CD8-positive, alpha-beta T cell (primary cell): ENCODE measurements at regions of chr10 and their contacts with region 1.

Region 1: GRCh38 chr10:32049113-32049512 is 7.1 kb downstream of the KIF5B start:
- DNase-seq: no peak
- ATAC-seq: no peak
- H3K4me3 ChIP-seq: no peak overlapping the region
- H3K4me3 Mint-ChIP-seq: no peak overlapping the region
- H3K27ac ChIP-seq: no peak overlapping the region
- H3K27ac Mint-ChIP-seq: peak overlapping the region; percentile 49
- H3K4me1 ChIP-seq: peaks cover 70% of the 10 kb centered on the region
- H3K4me1 Mint-ChIP-seq: peaks cover 87% of the 10 kb centered on the region
- H3K27me3 ChIP-seq: no peaks in the 10 kb centered on the region
- H3K27me3 Mint-ChIP-seq: no peaks in the 10 kb centered on the region
- CTCF ChIP-seq: no peak

Region 2: DNA sequence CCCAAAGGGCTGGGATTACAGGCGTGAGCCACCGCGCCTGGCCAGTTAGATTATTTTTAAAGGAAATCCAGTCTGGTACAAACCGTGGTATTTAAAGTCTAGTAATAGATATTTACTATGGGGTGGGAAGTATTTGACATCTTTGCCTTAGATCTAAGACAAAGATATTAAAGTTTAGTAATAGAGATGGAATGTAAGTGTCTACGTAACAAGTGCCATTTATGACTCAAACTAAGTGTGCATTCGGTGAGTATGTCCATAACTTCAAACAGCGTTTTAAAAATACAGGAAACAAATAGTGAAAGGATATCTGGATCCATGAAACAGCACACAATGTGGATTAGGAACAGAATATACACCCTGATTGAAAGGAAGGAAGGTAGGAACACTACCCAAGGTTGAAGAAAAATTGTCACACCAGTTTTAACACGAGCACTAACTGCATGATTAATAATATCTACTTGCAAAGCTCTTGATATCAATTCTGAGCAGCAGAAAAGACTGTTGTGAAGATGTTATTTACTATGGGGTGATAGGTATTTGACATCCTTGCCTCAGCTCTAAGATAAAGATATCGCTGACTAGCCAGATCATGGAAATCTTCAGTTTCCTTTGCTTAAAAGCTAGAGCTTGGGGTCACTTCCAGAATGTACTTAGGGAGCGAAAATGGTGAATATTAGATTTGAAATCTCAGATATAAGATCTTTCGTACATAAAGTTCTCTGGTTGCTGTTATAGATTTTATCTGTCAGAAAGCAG is 249.1 kb after region 1 on chr10:
- CTCF ChIA-PET with region 1: no interaction called
- POLR2A ChIA-PET with region 1: no interaction called
- intact Hi-C with region 1: loop called in 1 of 2 experiments (anchors 10 kb)
- DNase-seq: no peak
- ATAC-seq: no peak
- H3K4me3 ChIP-seq: no peak overlapping the region
- H3K4me3 Mint-ChIP-seq: peak overlapping the region; percentile 43
- H3K27ac ChIP-seq: no peak overlapping the region
- H3K27ac Mint-ChIP-seq: peak overlapping the region; percentile 70
- H3K4me1 ChIP-seq: peaks cover 41% of the 10 kb centered on the region
- H3K4me1 Mint-ChIP-seq: peaks cover 73% of the 10 kb centered on the region
- H3K27me3 ChIP-seq: no peaks in the 10 kb centered on the region
- H3K27me3 Mint-ChIP-seq: no peaks in the 10 kb centered on the region
- CTCF ChIP-seq: no peak